SK-N-SH (cell line): ENCODE measurements at regions of chr1 and their contacts with region 1.

Region 1: DNA sequence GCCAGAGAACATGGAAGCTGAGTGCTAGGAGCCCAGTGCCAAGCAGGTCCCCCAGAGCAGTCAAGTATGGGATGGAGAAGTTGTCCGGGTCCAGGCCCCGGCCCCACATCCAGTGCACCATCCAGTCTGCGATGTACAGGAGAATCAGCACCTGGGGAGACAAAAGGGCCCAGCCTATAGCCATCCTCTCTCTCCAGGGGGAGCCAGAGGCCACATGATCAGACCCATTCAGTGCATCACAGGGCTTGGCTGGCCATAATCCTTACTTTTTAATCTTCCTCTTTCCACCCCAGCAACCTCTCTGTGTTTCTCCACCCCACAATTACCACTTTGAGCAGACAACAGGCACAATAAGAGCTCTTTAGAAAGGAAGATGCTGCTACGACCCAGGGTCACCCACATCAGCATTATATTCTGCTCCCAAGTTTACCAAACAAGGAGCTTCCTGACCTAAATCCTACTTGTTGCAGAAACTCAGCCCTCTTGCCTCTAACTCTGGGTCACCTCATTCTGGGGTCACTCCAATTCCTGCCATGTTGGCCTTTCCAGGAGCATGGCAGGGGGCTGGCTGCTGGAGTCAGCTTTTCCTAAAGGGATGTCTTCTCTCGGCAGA is 16.4 kb upstream of the RAB29 start:
- DNase-seq: peak; percentile 82
- H3K4me3 ChIP-seq: no peak overlapping the region
- H3K27ac ChIP-seq: no peak overlapping the region; a peak in 1 of 4 replicates
- H3K4me1 ChIP-seq: peaks cover 0 to 3% of the 10 kb centered on the region in 2 experiments; a peak in 1 of 4 replicates
- H3K27me3 ChIP-seq: no peaks in the 10 kb centered on the region
- CTCF ChIP-seq: peak; percentile 86
- EP300 ChIP-seq: no peak
- RAD21 ChIP-seq: peak; percentile 94

Region 2: GRCh38 chr1:205775015-205775716 is 16.5 kb before region 1 on chr1 and contains the start of gene RAB29:
- CTCF ChIA-PET with region 1: interaction called, 37 read pairs
- POLR2A ChIA-PET with region 1: no interaction called
- DNase-seq: peak; percentile 82
- H3K4me3 ChIP-seq: peak within 1 kb of the TSS; percentile 88 to 94
- H3K27ac ChIP-seq: no peak within 1 kb of the TSS; a peak in 1 of 4 replicates
- H3K4me1 ChIP-seq: peaks cover 0 to 6% of the 10 kb centered on the region in 2 experiments; a peak in 1 of 4 replicates
- H3K27me3 ChIP-seq: no peaks in the 10 kb centered on the region; the same call in 1 of the 2 replicates
- CTCF ChIP-seq: no peak
- EP300 ChIP-seq: no peak
- RAD21 ChIP-seq: no peak
- polyA plus RNA-seq, gene RAB29: 9.2 and 9.8 TPM in 2 replicates

Region 3: DNA sequence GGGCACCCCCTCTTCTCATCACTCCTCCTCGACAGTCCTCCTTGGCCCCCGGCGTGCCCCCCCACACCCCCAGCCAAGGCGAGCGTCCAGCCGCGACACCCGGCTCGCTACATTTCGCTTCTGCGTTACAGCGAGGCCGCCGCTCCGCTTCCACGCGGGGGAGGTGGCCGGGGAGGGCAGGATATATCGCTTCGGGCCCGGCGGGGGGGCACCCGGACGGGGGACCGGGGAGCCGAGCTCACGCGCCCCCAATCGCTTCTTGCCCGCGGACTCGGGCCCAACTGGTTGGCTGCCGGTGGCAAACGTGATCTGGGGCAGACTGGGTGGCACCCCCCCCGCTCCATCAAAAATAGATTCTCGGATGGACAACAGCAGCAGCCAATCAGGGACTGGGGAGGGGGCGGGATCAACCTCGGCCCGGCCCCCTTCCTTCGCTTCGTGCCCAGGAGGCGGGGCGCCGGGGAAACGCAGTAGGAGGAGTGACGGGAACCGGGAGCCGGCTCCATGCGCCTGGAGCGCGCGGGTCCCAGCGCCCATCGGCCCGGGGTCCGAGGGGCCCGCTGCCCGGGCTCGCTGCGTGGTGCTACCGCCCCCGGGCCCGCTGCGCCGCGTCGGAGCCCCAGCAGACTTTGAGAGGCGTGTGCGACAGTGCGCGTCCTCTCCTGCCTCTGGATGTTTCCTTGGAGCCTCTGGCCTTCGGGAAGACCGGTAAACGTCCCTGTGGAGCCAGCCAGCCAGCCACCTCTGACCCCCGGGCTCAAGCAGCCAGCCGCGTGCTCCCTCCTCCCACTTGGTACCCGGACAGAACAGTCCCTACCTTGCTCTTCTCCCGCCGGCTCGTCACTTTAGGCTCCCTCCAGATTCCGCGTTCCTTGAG is 21.4 kb after region 1 on chr1 and contains the start of gene SLC41A1:
- CTCF ChIA-PET with region 1: interaction called, 39 read pairs
- POLR2A ChIA-PET with region 1: no interaction called
- DNase-seq: peak; percentile 100
- H3K4me3 ChIP-seq: peak within 1 kb of the TSS; percentile 77 to 94
- H3K27ac ChIP-seq: peak within 1 kb of the TSS; percentile 46 to 84
- H3K4me1 ChIP-seq: peaks cover 5 to 38% of the 10 kb centered on the region in 2 experiments; a peak in 2 of 4 replicates
- H3K27me3 ChIP-seq: no peaks in the 10 kb centered on the region
- CTCF ChIP-seq: no peak
- EP300 ChIP-seq: no peak
- RAD21 ChIP-seq: no peak
- polyA plus RNA-seq, gene SLC41A1: 18.3 and 25.1 TPM in 2 replicates

Region 4: DNA sequence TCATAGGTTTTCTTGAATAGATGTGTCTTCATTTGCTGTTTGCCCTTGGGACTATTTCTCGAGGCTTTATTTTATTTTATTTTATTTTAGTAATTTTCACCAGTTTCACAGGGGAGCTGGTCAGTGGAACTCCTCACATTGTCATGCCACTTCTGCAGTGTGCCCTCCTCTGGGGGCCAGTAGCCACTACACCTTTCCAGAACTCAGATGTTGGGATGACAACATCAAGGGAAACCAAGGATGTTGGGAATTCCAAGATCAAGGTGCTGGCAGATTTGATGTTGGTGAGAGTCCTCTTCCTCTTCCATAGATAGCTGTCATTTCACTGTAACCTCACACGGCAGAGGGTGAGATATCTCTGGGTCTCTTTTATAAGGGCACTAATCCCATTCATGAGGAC is 116.1 kb after region 1 on chr1:
- CTCF ChIA-PET with region 1: interaction called, 62 read pairs
- POLR2A ChIA-PET with region 1: no interaction called
- DNase-seq: peak; percentile 20
- H3K4me3 ChIP-seq: no peak overlapping the region
- H3K27ac ChIP-seq: no peak overlapping the region
- H3K4me1 ChIP-seq: no peaks in the 10 kb centered on the region
- H3K27me3 ChIP-seq: no peaks in the 10 kb centered on the region
- CTCF ChIP-seq: peak; percentile 68
- EP300 ChIP-seq: no peak
- RAD21 ChIP-seq: peak; percentile 67

Region 5: DNA sequence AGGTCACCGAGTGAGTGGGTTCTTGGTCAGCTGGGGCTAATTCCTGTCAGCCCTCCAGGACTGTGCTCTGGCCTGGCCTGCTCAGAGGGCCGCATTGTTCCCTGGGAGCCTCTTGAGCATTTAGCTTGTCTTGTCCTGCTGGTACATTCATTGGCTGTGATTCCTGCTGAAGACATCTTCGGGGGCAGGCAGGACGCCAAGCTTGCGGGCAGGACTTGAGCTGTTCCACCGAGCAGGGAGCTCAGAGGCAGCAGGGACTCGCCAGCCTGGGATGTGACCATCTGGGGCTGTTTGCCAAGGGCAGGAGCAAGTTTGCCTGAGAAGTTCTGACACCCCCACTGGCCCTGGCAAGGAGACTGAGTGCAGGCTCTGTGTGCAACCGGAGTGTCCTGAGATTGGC is 158.6 kb after region 1 on chr1:
- CTCF ChIA-PET with region 1: interaction called, 20 read pairs
- POLR2A ChIA-PET with region 1: no interaction called
- DNase-seq: no peak
- H3K4me3 ChIP-seq: no peak overlapping the region
- H3K27ac ChIP-seq: no peak overlapping the region
- H3K4me1 ChIP-seq: peaks cover 0 to 3% of the 10 kb centered on the region in 2 experiments; a peak in 1 of 4 replicates
- H3K27me3 ChIP-seq: peaks cover 15% of the 10 kb centered on the region; the same call in 1 of the 2 replicates
- CTCF ChIP-seq: no peak
- EP300 ChIP-seq: no peak
- RAD21 ChIP-seq: no peak

Region 6: DNA sequence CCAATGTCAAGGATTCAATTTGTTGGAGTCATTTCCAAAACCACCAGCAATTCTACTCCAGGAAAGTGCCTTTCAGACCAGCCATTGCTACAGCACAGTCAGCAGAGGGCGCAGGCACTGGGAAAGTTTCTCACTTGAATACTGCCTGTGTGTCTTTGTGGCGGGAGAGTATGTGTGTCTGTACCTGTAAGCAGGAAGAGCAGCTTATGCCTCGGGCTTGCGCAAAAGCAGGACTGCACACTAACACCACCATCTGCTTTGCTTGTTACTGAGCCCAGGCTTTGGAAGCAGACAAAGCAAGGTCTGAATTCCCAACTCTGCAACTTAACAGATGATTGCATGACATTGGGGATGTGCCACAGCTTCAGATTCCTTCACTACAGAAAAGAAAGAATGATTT is 239.0 kb after region 1 on chr1:
- CTCF ChIA-PET with region 1: interaction called, 12 read pairs
- POLR2A ChIA-PET with region 1: no interaction called
- DNase-seq: peak; percentile 59
- H3K4me3 ChIP-seq: peak overlapping the region in 1 of 2 experiments; percentile 8; a peak in 1 of 4 replicates
- H3K27ac ChIP-seq: no peak overlapping the region
- H3K4me1 ChIP-seq: peaks cover 0 to 2% of the 10 kb centered on the region in 2 experiments; a peak in 1 of 4 replicates
- H3K27me3 ChIP-seq: peaks cover 16% of the 10 kb centered on the region; the same call in 1 of the 2 replicates
- CTCF ChIP-seq: peak; percentile 82
- EP300 ChIP-seq: no peak
- RAD21 ChIP-seq: peak; percentile 82